ENCODE measurements at regions of chr3 and their contacts with region 1.

Region 1: DNA sequence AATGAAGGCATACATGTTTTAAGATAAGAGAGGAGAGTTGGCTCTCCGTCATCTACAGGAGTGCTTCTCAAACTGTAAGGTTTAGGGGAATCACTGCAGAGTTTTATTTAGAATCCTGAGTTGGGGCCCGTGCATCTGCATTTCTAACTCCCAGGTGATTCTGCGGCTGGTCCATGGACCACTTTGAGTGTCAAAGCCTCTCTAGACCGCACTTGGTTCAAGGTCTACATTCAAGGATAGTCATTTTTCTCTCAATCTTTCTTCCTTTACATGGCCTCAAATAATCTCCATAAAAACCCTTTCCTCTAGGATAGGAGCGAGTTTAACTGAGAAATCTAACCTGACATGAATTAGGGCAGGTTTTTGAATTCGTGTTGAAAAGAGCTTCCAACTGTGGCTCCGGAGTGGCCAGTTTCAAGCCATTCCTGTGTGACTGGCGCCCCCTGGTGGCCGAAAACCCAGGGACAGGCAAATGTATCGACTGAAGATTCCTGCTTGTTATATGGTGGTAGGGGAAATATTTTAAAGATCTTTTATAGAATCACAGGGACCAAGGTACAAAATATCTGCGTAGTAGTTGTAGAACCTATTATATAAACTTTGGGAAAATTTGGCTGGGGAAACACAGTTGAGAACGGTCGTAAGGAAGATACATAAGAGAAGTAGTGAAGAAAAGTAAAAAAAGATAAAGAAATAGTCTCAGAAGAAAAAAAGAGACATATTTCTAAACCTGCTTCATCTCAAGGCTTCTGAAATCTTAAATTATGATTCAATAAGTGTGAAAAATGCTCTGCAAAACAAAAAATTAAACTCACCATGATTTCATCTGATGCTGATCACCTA is 11.9 kb downstream of the GABRR3 start:
- DNase-seq: peak; percentile 80 to 94 (median 83)
- ATAC-seq: peak; percentile 77 to 84 (median 80)
- H3K4me3 ChIP-seq: no peak overlapping the region
- H3K27ac ChIP-seq: no peak overlapping the region
- H3K4me1 ChIP-seq: peaks cover 0 to 8% (median 0%) of the 10 kb centered on the region in 12 donors
- H3K27me3 ChIP-seq: no peaks in the 10 kb centered on the region
- CTCF ChIP-seq: peak; percentile 92 to 99 (median 97)
- POLR2A ChIP-seq: no peak

Region 2: DNA sequence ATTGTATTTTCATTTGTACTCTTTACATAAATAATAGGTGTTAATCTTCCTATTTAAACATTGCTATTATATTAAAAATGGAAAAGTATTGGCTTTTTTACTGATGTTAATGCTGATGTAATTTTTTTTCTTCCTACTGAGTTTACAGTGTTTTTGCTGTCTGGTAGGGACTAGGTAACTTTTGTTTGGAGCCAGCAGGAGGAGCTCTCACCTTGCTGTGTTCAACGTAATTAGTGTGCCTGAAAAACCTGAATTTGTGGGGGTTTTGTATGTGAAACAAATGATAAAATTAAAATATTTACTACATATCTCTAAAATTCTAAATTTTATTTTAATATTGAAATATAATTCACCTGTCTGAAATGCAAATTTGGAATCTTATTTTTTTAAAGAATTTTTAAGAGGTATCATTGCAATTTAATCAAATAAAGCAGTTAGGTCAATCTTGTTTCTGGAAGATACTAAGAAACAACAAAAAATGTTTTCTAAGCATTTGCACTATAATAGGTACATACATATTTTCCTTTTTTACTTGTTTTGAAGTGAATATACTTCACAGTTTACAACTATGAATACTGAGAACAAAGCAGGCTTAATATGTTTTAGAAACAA is 1160.0 kb before region 1 on chr3:
- intact Hi-C with region 1: loop called in 1 of 10 experiments (anchors 5 kb)
- DNase-seq: no peak
- ATAC-seq: no peak
- H3K4me3 ChIP-seq: no peak overlapping the region
- H3K27ac ChIP-seq: no peak overlapping the region
- H3K4me1 ChIP-seq: no peaks in the 10 kb centered on the region
- H3K27me3 ChIP-seq: no peaks in the 10 kb centered on the region
- CTCF ChIP-seq: peak in 10 of 12 donors; percentile 23 to 60 (median 40)
- POLR2A ChIP-seq: no peak

Region 3: GRCh38 chr3:97952280-97952679 is 70.9 kb before region 1 on chr3:
- intact Hi-C with region 1: no loop called
- DNase-seq: peak in 1 of 5 donors; percentile 44
- ATAC-seq: peak in 2 of 4 donors; percentile 65 to 84
- H3K4me3 ChIP-seq: no peak overlapping the region
- H3K27ac ChIP-seq: no peak overlapping the region
- H3K4me1 ChIP-seq: no peaks in the 10 kb centered on the region
- H3K27me3 ChIP-seq: no peaks in the 10 kb centered on the region
- CTCF ChIP-seq: no peak
- POLR2A ChIP-seq: no peak

Region 4: GRCh38 chr3:97971677-97972567 is 51.3 kb before region 1 on chr3 and contains the start of gene RIOX2:
- intact Hi-C with region 1: loop called in 2 of 10 experiments (anchors 5 kb)
- DNase-seq: peak; percentile 73 to 88 (median 80)
- ATAC-seq: peak; percentile 80 to 99 (median 96)
- H3K4me3 ChIP-seq: peak within 1 kb of the TSS; percentile 72 to 94 (median 81)
- H3K27ac ChIP-seq: peak within 1 kb of the TSS in 11 of 12 donors; percentile 57 to 88 (median 80)
- H3K4me1 ChIP-seq: peaks cover 0 to 25% (median 8%) of the 10 kb centered on the region in 12 donors
- H3K27me3 ChIP-seq: no peaks in the 10 kb centered on the region
- CTCF ChIP-seq: peak in 4 of 12 donors; percentile 14 to 31 (median 26)
- POLR2A ChIP-seq: peak in 1 of 2 donors; percentile 76
- total RNA-seq, gene RIOX2: 10.3 to 15.9 (median 12.1) TPM

Region 5: GRCh38 chr3:97979610-97980009 is 43.6 kb before region 1 on chr3:
- intact Hi-C with region 1: loop called in 2 of 10 experiments (anchors 5 kb)
- DNase-seq: peak in 4 of 5 donors; percentile 23 to 67 (median 36)
- ATAC-seq: peak; percentile 78 to 95 (median 88)
- H3K4me3 ChIP-seq: no peak overlapping the region
- H3K27ac ChIP-seq: no peak overlapping the region
- H3K4me1 ChIP-seq: peaks cover 0 to 18% (median 3%) of the 10 kb centered on the region in 12 donors
- H3K27me3 ChIP-seq: no peaks in the 10 kb centered on the region
- CTCF ChIP-seq: no peak
- POLR2A ChIP-seq: no peak

Measured in heart left ventricle (tissue), 16 donors.